Naive thymus-derived CD4-positive, alpha-beta T cell (primary cell): ENCODE measurements at regions of chr5 and their contacts with region 1.

Region 1: GRCh38 chr5:9544502-9545135 is 1.3 kb downstream of the SEMA5A start:
- DNase-seq: peak in 6 of 9 donors; percentile 4 to 52 (median 23)
- ATAC-seq: peak; percentile 42
- H3K4me3 ChIP-seq: no peak overlapping the region
- H3K4me3 Mint-ChIP-seq: peak overlapping the region; percentile 44 to 82 (median 66)
- H3K27ac ChIP-seq: no peak overlapping the region
- H3K27ac Mint-ChIP-seq: peak overlapping the region in 1 of 9 donors; percentile 0
- H3K4me1 ChIP-seq: no peaks in the 10 kb centered on the region
- H3K4me1 Mint-ChIP-seq: peaks cover 0 to 16% (median 11%) of the 10 kb centered on the region in 7 donors
- H3K27me3 ChIP-seq: no peaks in the 10 kb centered on the region
- H3K27me3 Mint-ChIP-seq: peaks cover 29 to 45% (median 31%) of the 10 kb centered on the region in 5 donors

Region 2: GRCh38 chr5:7886849-7887475 is 1657.7 kb before region 1 on chr5:
- CTCF ChIA-PET with region 1: no interaction called
- POLR2A ChIA-PET with region 1: no interaction called
- intact Hi-C with region 1: loop called in 1 of 2 experiments (anchors 5 kb)
- DNase-seq: peak in 3 of 9 donors; percentile 19 to 29 (median 23)
- ATAC-seq: no peak
- H3K4me3 ChIP-seq: no peak overlapping the region
- H3K4me3 Mint-ChIP-seq: no peak overlapping the region
- H3K27ac ChIP-seq: no peak overlapping the region
- H3K27ac Mint-ChIP-seq: no peak overlapping the region
- H3K4me1 ChIP-seq: no peaks in the 10 kb centered on the region
- H3K4me1 Mint-ChIP-seq: peaks cover 0 to 9% (median 7%) of the 10 kb centered on the region in 7 donors
- H3K27me3 ChIP-seq: no peaks in the 10 kb centered on the region
- H3K27me3 Mint-ChIP-seq: no peaks in the 10 kb centered on the region

Region 3: GRCh38 chr5:9361835-9362234 is 182.8 kb before region 1 on chr5:
- CTCF ChIA-PET with region 1: no interaction called
- POLR2A ChIA-PET with region 1: no interaction called
- intact Hi-C with region 1: loop called in 1 of 2 experiments (anchors 5 kb)
- DNase-seq: peak in 6 of 9 donors; percentile 7 to 34 (median 16)
- ATAC-seq: peak; percentile 45
- H3K4me3 ChIP-seq: no peak overlapping the region
- H3K4me3 Mint-ChIP-seq: no peak overlapping the region
- H3K27ac ChIP-seq: no peak overlapping the region
- H3K27ac Mint-ChIP-seq: peak overlapping the region in 1 of 9 donors; percentile 28
- H3K4me1 ChIP-seq: no peaks in the 10 kb centered on the region
- H3K4me1 Mint-ChIP-seq: peaks cover 0 to 19% (median 0%) of the 10 kb centered on the region in 7 donors
- H3K27me3 ChIP-seq: no peaks in the 10 kb centered on the region
- H3K27me3 Mint-ChIP-seq: peaks cover 0 to 4% (median 0%) of the 10 kb centered on the region in 5 donors